ENCODE measurements at regions of chr17 and their contacts with region 1.

Region 1: GRCh38 chr17:2090804-2091534 is 36.1 kb downstream of the HIC1 start:
- DNase-seq: no peak
- ATAC-seq: no peak
- H3K4me3 ChIP-seq: no peak overlapping the region
- H3K4me3 Mint-ChIP-seq: peak overlapping the region; percentile 92
- H3K27ac ChIP-seq: no peak overlapping the region
- H3K27ac Mint-ChIP-seq: peak overlapping the region; percentile 51
- H3K4me1 ChIP-seq: peaks cover 45 to 51% of the 10 kb centered on the region in 2 donors
- H3K4me1 Mint-ChIP-seq: peaks cover 52% of the 10 kb centered on the region
- H3K27me3 ChIP-seq: no peaks in the 10 kb centered on the region
- H3K27me3 Mint-ChIP-seq: no peaks in the 10 kb centered on the region
- CTCF ChIP-seq: no peak

Region 2: GRCh38 chr17:2064980-2065785 is 25.8 kb before region 1 on chr17:
- CTCF ChIA-PET with region 1: interaction called, 92 read pairs
- POLR2A ChIA-PET with region 1: interaction called, 6 read pairs
- intact Hi-C with region 1: no loop called
- DNase-seq: peak; percentile 40
- ATAC-seq: peak; percentile 21
- H3K4me3 ChIP-seq: no peak overlapping the region
- H3K4me3 Mint-ChIP-seq: peak overlapping the region; percentile 61
- H3K27ac ChIP-seq: peak overlapping the region; percentile 41 to 64
- H3K27ac Mint-ChIP-seq: peak overlapping the region; percentile 86
- H3K4me1 ChIP-seq: peaks cover 20 to 34% of the 10 kb centered on the region in 2 donors
- H3K4me1 Mint-ChIP-seq: peaks cover 42% of the 10 kb centered on the region
- H3K27me3 ChIP-seq: peaks cover 0 to 1% (median 0%) of the 10 kb centered on the region in 4 experiments
- H3K27me3 Mint-ChIP-seq: no peaks in the 10 kb centered on the region
- CTCF ChIP-seq: peak; percentile 20

Region 3: GRCh38 chr17:2137342-2138098 is 46.6 kb after region 1 on chr17:
- CTCF ChIA-PET with region 1: interaction called, 3 read pairs
- POLR2A ChIA-PET with region 1: no interaction called
- intact Hi-C with region 1: loop called (anchors 10 kb)
- DNase-seq: peak; percentile 39
- ATAC-seq: peak; percentile 64
- H3K4me3 ChIP-seq: no peak overlapping the region
- H3K4me3 Mint-ChIP-seq: peak overlapping the region; percentile 27
- H3K27ac ChIP-seq: no peak overlapping the region
- H3K27ac Mint-ChIP-seq: no peak overlapping the region
- H3K4me1 ChIP-seq: peaks cover 18 to 20% of the 10 kb centered on the region in 2 donors
- H3K4me1 Mint-ChIP-seq: peaks cover 22% of the 10 kb centered on the region
- H3K27me3 ChIP-seq: no peaks in the 10 kb centered on the region
- H3K27me3 Mint-ChIP-seq: no peaks in the 10 kb centered on the region
- CTCF ChIP-seq: no peak